B cell (primary cell): ENCODE measurements at regions of chr19 and their contacts with region 1.

Region 1: GRCh38 chr19:39497996-39498797 is 550 bp upstream of the DLL3 start:
- DNase-seq: peak; percentile 65
- ATAC-seq: peak; percentile 37
- H3K4me3 ChIP-seq: peak overlapping the region; percentile 11 to 65 (median 48)
- H3K4me3 Mint-ChIP-seq: peak overlapping the region; percentile 85
- H3K27ac ChIP-seq: no peak overlapping the region
- H3K27ac Mint-ChIP-seq: peak overlapping the region; percentile 33
- H3K4me1 ChIP-seq: peaks cover 27 to 30% of the 10 kb centered on the region in 2 donors
- H3K4me1 Mint-ChIP-seq: peaks cover 22% of the 10 kb centered on the region
- H3K27me3 ChIP-seq: peaks cover 0 to 46% (median 22%) of the 10 kb centered on the region in 4 experiments
- H3K27me3 Mint-ChIP-seq: peaks cover 26% of the 10 kb centered on the region
- CTCF ChIP-seq: peak; percentile 17

Region 2: GRCh38 chr19:39156326-39157230 is 341.6 kb before region 1 on chr19:
- CTCF ChIA-PET with region 1: no interaction called
- POLR2A ChIA-PET with region 1: no interaction called
- intact Hi-C with region 1: no loop called
- DNase-seq: no peak
- ATAC-seq: no peak
- H3K4me3 ChIP-seq: no peak overlapping the region
- H3K4me3 Mint-ChIP-seq: no peak overlapping the region
- H3K27ac ChIP-seq: no peak overlapping the region
- H3K27ac Mint-ChIP-seq: no peak overlapping the region
- H3K4me1 ChIP-seq: no peaks in the 10 kb centered on the region
- H3K4me1 Mint-ChIP-seq: peaks cover 8% of the 10 kb centered on the region
- H3K27me3 ChIP-seq: no peaks in the 10 kb centered on the region
- H3K27me3 Mint-ChIP-seq: no peaks in the 10 kb centered on the region
- CTCF ChIP-seq: no peak

Region 3: GRCh38 chr19:39381910-39382611 is 116.1 kb before region 1 on chr19:
- CTCF ChIA-PET with region 1: no interaction called
- POLR2A ChIA-PET with region 1: no interaction called
- intact Hi-C with region 1: no loop called
- DNase-seq: no peak
- ATAC-seq: no peak
- H3K4me3 ChIP-seq: no peak overlapping the region
- H3K4me3 Mint-ChIP-seq: no peak overlapping the region
- H3K27ac ChIP-seq: no peak overlapping the region
- H3K27ac Mint-ChIP-seq: peak overlapping the region; percentile 20
- H3K4me1 ChIP-seq: peaks cover 0 to 6% of the 10 kb centered on the region in 2 donors
- H3K4me1 Mint-ChIP-seq: peaks cover 9% of the 10 kb centered on the region
- H3K27me3 ChIP-seq: no peaks in the 10 kb centered on the region
- H3K27me3 Mint-ChIP-seq: no peaks in the 10 kb centered on the region
- CTCF ChIP-seq: no peak

Region 4: GRCh38 chr19:39448271-39448670 is 49.9 kb before region 1 on chr19:
- CTCF ChIA-PET with region 1: no interaction called
- POLR2A ChIA-PET with region 1: no interaction called
- intact Hi-C with region 1: no loop called
- DNase-seq: peak; percentile 66
- ATAC-seq: no peak
- H3K4me3 ChIP-seq: no peak overlapping the region
- H3K4me3 Mint-ChIP-seq: peak overlapping the region; percentile 80
- H3K27ac ChIP-seq: peak overlapping the region; percentile 16 to 58
- H3K27ac Mint-ChIP-seq: peak overlapping the region; percentile 91
- H3K4me1 ChIP-seq: peaks cover 42 to 56% of the 10 kb centered on the region in 2 donors
- H3K4me1 Mint-ChIP-seq: peaks cover 73% of the 10 kb centered on the region
- H3K27me3 ChIP-seq: no peaks in the 10 kb centered on the region
- H3K27me3 Mint-ChIP-seq: no peaks in the 10 kb centered on the region
- CTCF ChIP-seq: no peak

Region 5: DNA sequence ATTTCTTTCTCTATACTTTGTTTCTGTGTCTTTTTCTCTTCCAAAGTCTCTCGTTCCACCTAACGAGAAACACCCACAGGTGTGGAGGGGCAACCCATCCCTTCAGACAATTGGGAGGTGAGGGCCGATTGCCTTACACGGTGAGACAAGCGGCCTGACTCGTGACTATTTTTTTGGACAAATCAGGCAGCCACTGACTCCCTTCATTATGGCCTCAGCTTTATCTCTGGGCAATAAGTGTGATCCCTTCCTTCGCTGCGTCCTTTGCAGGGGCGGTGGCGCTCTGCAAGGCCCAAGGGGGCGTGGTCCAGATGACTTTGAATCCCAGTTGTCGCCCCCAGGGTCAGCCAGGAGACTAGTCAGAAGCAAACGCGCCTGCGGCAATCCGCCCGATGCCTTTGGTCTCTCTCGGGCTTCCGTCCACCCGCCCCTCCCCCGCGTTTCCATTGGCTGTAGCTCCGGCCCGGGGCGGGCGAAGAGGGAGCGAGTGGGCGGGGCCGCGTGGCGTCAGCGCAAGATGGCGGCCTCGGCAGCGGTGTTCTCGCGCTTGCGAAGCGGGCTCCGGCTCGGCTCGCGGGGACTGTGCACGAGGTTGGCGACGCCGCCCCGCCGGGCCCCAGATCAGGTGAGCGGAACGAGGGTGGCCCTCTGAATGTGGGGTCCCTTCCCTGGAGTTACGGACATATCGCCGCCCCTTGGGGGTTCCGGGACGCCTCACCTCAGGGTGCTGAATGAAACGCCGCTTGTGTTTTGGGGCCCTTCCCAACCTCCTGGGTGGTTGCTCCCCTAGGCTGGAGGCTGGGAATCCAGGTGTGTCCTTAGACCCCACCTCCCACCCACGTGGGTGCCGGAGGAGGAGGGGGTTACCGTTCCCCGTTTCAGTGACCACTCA is 17.6 kb before region 1 on chr19 and contains the start of gene TIMM50:
- CTCF ChIA-PET with region 1: interaction called, 6 read pairs
- POLR2A ChIA-PET with region 1: no interaction called
- intact Hi-C with region 1: loop called (anchors 2 kb)
- DNase-seq: peak; percentile 95
- ATAC-seq: peak; percentile 99
- H3K4me3 ChIP-seq: peak within 1 kb of the TSS; percentile 65 to 95 (median 89)
- H3K4me3 Mint-ChIP-seq: peak within 1 kb of the TSS; percentile 96
- H3K27ac ChIP-seq: peak within 1 kb of the TSS; percentile 67 to 84
- H3K27ac Mint-ChIP-seq: peak within 1 kb of the TSS; percentile 94
- H3K4me1 ChIP-seq: peaks cover 14 to 21% of the 10 kb centered on the region in 2 donors
- H3K4me1 Mint-ChIP-seq: peaks cover 25% of the 10 kb centered on the region
- H3K27me3 ChIP-seq: no peaks in the 10 kb centered on the region
- H3K27me3 Mint-ChIP-seq: no peaks in the 10 kb centered on the region
- CTCF ChIP-seq: no peak
- total RNA-seq, gene TIMM50: 52.3 and 55.3 TPM in 2 replicates